Activated CD4-positive, alpha-beta T cell treated with anti-CD3 and anti-CD28 coated beads for 36 hours (primary cell): ENCODE measurements at regions of chr15 and their contacts with region 1.

Region 1: DNA sequence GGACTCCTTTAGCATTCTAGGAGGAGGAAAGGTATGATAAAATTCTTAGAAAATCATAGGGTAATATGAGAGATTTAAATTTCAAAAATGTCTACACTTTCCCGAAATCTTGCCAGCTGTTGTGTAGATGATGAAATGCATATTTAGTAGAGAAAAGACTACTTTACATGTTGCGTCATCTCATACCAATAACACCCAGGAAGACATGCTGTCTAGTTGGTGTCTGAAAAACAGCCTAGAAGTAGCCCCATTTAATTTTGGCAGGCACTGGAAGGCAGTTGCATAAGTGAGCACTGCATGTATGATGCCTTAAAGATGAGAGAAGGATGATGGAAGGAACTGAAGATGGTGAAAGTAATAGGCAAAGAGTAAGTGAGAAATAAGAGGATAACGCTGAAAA is 310.5 kb upstream of the TPM1 start:
- DNase-seq: no peak
- ATAC-seq: no peak
- H3K4me3 Mint-ChIP-seq: no peak overlapping the region
- H3K27ac Mint-ChIP-seq: no peak overlapping the region
- H3K4me1 Mint-ChIP-seq: no peaks in the 10 kb centered on the region
- H3K27me3 Mint-ChIP-seq: peaks cover 22% of the 10 kb centered on the region

Region 2: GRCh38 chr15:62742409-62743171 is 10.5 kb after region 1 on chr15:
- CTCF ChIA-PET with region 1: interaction called, 22 read pairs
- POLR2A ChIA-PET with region 1: interaction called, 4 read pairs
- intact Hi-C with region 1: no loop called
- DNase-seq: peak; percentile 67
- ATAC-seq: peak; percentile 55
- H3K4me3 Mint-ChIP-seq: no peak overlapping the region
- H3K27ac Mint-ChIP-seq: no peak overlapping the region
- H3K4me1 Mint-ChIP-seq: peaks cover 7% of the 10 kb centered on the region
- H3K27me3 Mint-ChIP-seq: no peaks in the 10 kb centered on the region

Region 3: GRCh38 chr15:62777671-62778070 is 45.6 kb after region 1 on chr15:
- CTCF ChIA-PET with region 1: no interaction called
- POLR2A ChIA-PET with region 1: no interaction called
- intact Hi-C with region 1: no loop called
- DNase-seq: no peak
- ATAC-seq: peak; percentile 36
- H3K4me3 Mint-ChIP-seq: no peak overlapping the region
- H3K27ac Mint-ChIP-seq: no peak overlapping the region
- H3K4me1 Mint-ChIP-seq: no peaks in the 10 kb centered on the region
- H3K27me3 Mint-ChIP-seq: no peaks in the 10 kb centered on the region